Activated T-helper 1 cell treated with anti-CD3 and anti-CD28 coated beads, Interleukin-12 subunit alpha, Interleukin-12 subunit beta, Interleukin-2, Interleukin-4 antibody, amounts not matched to agents 30 ng/mL and 10 ng/mL and 1 ng/mL, durations not matched to agents 14 hours and 24 hours and 36 hours (primary cell): ENCODE measurements at regions of chr1 and their contacts with region 1.

Region 1: GRCh38 chr1:16009030-16009709 is 5.1 kb downstream of the SRARP start:
- DNase-seq: peak; percentile 55
- H3K4me3 Mint-ChIP-seq: no peak overlapping the region
- H3K27ac Mint-ChIP-seq: no peak overlapping the region
- H3K4me1 Mint-ChIP-seq: peaks cover 30% of the 10 kb centered on the region
- H3K27me3 Mint-ChIP-seq: no peaks in the 10 kb centered on the region

Region 2: DNA sequence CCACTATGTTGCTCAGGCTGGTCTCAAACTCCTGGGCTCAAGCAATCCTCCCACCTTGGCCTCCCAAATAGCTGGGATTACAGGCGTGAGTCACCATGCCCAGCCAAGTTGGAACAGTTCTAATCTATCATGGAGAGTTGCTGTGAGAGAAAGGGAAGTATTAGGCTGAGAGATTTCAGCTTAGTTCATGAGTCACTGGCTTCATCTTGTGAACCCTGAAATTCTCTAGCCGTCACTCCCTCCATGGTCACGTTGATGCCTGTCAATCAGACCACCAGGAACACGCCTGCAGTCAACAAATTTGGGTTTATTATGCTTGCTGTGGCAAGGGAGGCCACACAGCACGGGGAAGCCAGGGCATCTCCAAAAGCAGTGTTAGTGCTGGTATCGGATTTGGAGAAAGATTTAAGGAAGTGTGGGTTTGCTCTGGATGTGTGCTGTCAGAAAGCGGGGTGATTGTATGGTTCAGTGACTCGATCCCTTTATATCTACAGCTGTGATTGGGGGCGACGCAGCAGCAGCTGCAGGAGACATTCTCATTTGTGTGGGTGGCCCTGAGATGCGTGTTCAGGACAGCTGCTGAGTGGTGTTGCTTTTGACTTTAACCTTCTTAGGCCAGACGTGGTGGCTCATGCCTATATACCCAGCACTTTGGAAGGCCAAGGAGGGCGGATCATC is 220.4 kb before region 1 on chr1:
- intact Hi-C with region 1: loop called (anchors 1 kb)
- DNase-seq: no peak
- H3K4me3 Mint-ChIP-seq: no peak overlapping the region
- H3K27ac Mint-ChIP-seq: no peak overlapping the region
- H3K4me1 Mint-ChIP-seq: no peaks in the 10 kb centered on the region
- H3K27me3 Mint-ChIP-seq: peaks cover 7% of the 10 kb centered on the region

Region 3: DNA sequence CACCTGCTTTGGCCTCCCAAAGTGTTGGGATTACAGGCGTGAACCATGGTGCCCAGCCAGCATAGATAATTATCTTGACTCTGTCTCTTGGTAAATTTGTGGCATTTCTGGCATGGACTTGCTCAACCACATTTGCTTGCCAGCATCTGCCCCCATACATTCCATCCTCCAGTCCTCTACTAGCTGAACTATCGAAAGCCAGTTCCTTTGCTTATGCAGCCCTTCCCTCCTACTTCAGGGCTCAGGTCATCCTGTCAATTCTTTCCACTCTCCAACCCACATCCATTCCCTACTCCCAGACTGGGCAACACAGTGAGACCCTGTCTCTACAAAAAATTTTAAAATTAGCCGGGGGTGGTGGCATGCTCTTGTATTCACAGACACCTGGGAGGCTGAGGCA is 188.7 kb before region 1 on chr1:
- intact Hi-C with region 1: loop called (anchors 5 kb)
- DNase-seq: no peak
- H3K4me3 Mint-ChIP-seq: no peak overlapping the region
- H3K27ac Mint-ChIP-seq: no peak overlapping the region
- H3K4me1 Mint-ChIP-seq: peaks cover 10% of the 10 kb centered on the region
- H3K27me3 Mint-ChIP-seq: no peaks in the 10 kb centered on the region

Region 4: DNA sequence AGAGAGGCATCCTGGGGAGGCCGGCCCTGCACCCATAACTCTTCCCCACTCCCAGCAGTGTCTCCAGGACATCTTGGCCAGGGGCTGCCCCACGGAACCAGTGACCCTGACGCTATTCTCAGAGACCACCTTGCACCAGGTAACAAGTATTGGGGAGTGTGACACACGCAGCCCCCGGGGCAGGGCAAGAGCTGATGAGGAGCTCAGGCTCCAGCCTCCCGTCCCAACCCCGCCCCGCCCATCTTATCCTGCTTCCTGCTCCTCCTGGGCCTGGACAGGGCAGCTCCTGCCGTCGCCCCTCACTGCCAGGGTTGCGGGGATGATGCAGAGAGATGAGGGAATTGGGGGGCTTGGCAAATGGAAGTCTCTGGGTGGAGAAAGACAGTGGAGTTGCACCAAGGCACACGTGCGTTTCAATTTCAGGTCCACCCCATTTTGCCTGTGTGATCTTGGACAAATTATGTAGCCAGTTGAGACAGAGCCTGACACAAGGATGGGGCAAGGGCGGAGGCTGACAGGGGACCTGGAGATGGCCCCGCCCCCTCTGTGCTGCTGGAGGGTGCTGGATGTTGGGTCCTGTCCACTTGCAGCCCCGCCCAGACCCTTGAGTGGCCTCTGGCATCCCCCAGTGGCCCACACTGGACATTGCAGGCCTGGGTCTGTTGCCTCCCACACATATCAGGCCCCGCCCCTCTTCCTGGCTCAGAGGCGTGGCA is 23.4 kb after region 1 on chr1:
- intact Hi-C with region 1: loop called (anchors 1 kb)
- DNase-seq: peak; percentile 33
- H3K4me3 Mint-ChIP-seq: no peak overlapping the region
- H3K27ac Mint-ChIP-seq: no peak overlapping the region
- H3K4me1 Mint-ChIP-seq: no peaks in the 10 kb centered on the region
- H3K27me3 Mint-ChIP-seq: peaks cover 9% of the 10 kb centered on the region

Region 5: GRCh38 chr1:16187748-16188401 is 178.7 kb after region 1 on chr1:
- intact Hi-C with region 1: loop called (anchors 1 kb)
- DNase-seq: peak; percentile 63
- H3K4me3 Mint-ChIP-seq: no peak overlapping the region
- H3K27ac Mint-ChIP-seq: no peak overlapping the region
- H3K4me1 Mint-ChIP-seq: no peaks in the 10 kb centered on the region
- H3K27me3 Mint-ChIP-seq: peaks cover 9% of the 10 kb centered on the region